ENCODE measurements at regions of chrX and their contacts with region 1.

Region 1: DNA sequence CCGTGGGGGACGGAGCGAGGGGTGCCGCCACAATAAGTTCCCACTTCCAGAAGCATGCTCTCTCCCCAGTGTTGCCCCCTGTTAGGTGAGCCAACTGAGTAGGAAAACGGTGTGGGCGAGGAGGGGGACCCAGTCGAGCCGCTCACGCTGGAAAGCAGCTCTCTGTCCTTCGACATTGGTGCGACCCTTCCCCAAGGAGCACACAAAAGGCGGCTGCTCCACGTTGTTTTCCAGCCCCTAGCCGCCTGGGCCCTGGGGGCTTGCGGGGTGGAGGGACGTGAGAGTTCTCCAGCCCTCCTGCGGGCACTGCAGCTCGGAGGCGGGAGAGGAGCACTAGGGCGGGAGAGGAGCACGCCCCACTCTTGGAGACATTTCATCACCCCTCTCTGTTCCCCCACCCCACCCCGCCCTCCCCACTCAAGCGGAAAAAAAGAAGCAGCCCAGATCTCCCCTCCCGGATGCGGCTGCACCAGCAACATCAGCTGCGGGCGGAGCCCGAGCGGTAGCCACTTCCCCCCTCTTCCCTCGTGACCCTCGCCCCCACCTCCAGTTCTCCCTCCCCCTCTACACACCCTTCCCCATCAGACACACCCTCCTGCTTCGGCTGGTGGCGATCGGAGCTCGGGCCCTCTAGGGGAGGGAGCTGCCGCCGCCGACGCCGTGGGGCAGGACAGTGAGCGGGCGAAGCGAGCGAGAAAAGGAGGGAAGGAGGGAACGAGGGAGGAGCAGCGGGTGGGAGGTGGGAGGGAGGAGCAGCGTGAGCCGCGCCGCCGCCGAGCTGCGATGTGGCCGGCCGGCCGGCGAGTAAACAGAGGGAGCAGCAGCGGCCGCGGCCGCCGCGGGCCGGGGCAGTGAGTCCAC is at the start of gene DOCK11:
- DNase-seq: peak; percentile 95
- H3K4me3 ChIP-seq: peak within 1 kb of the TSS; percentile 73 to 88 (median 81)
- H3K27ac ChIP-seq: peak within 1 kb of the TSS; percentile 86 to 93 (median 90)
- H3K4me1 ChIP-seq: peaks cover 0 to 17% (median 2%) of the 10 kb centered on the region in 4 donors
- H3K27me3 ChIP-seq: no peaks in the 10 kb centered on the region
- CTCF ChIP-seq: no peak
- EP300 ChIP-seq: no peak
- POLR2A ChIP-seq: no peak
- total RNA-seq, gene DOCK11: 40.7 to 54.6 (median 45.5) TPM

Region 2: GRCh38 chrX:118226090-118226428 is 269.2 kb before region 1 on chrX:
- intact Hi-C with region 1: no loop called
- DNase-seq: no peak
- H3K4me3 ChIP-seq: no peak overlapping the region
- H3K27ac ChIP-seq: no peak overlapping the region
- H3K4me1 ChIP-seq: peaks cover 0 to 6% (median 3%) of the 10 kb centered on the region in 4 donors
- H3K27me3 ChIP-seq: no peaks in the 10 kb centered on the region
- CTCF ChIP-seq: peak in 1 of 4 experiments; percentile 20
- EP300 ChIP-seq: no peak
- POLR2A ChIP-seq: no peak

Region 3: DNA sequence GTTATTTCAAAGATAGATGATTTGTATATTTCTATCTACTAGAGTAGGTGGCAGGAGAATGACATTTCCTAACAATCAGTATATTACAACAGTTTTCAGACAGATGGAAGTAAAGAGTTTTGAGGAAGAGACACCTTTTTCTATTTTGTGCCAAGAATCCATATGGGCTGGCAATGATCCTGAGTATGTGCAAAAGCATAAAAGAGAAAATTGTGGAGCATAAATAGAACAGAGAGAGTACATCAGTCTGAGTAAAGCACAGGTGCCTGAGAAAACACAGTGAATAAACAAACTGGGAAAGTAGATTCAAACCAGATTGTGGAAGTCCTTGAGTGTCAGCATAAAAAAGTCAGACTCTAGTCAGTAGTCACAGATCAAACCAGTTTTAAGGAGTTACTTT is 246.1 kb before region 1 on chrX:
- intact Hi-C with region 1: no loop called
- DNase-seq: no peak
- H3K4me3 ChIP-seq: no peak overlapping the region
- H3K27ac ChIP-seq: no peak overlapping the region
- H3K4me1 ChIP-seq: no peaks in the 10 kb centered on the region
- H3K27me3 ChIP-seq: no peaks in the 10 kb centered on the region
- CTCF ChIP-seq: no peak
- EP300 ChIP-seq: no peak
- POLR2A ChIP-seq: no peak

Region 4: DNA sequence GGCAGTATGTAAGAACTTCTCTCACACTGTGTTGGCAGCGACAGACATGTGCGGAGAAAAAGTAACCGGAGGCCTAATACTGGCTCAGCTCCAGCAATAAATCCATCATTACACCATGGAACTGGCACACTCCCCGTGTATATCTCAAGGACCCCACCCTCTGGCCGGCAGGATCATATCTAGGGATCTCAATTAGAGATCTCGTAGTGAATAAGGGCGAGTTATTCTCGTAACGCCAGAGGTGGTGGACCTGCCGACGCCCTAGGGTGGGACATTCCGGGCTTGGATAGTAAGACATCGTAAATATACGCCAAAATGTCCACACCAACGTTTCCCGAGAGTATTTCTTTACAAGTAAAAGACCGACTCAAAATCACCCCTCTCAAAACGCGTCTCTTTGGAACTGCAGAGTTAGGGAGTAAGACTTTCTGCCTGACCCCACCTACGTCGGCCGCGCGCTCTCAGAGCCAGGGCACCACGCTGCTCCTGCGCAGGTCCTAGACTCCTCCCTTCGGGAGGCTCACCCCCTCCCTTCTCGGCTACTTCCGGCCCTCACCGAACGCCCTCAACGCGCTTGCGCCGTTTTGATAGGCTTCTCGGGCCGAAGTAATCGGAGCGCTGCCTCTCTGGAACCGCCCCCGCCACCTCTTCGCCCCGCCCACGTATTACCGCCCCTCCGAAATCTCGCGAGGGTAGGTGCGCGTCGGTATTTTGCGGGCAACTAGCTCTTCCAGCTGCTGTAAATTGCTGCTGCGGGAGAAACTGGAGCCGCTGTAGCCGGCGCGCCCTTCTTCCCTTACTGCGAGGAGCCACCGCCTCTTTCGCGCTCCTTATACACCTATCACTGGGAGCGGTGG is 149.7 kb before region 1 on chrX and contains the start of gene WDR44:
- intact Hi-C with region 1: loop called (anchors 5 kb)
- DNase-seq: peak; percentile 98
- H3K4me3 ChIP-seq: peak within 1 kb of the TSS; percentile 53 to 75 (median 69)
- H3K27ac ChIP-seq: peak within 1 kb of the TSS; percentile 92 to 95 (median 92)
- H3K4me1 ChIP-seq: peaks cover 0 to 17% (median 11%) of the 10 kb centered on the region in 4 donors
- H3K27me3 ChIP-seq: no peaks in the 10 kb centered on the region
- CTCF ChIP-seq: no peak
- EP300 ChIP-seq: peak in 1 of 4 donors; percentile 19
- POLR2A ChIP-seq: peak; percentile 40
- total RNA-seq, gene WDR44: 17.0 to 23.2 (median 20.2) TPM

Region 5: GRCh38 chrX:118566359-118566758 is 71.1 kb after region 1 on chrX:
- intact Hi-C with region 1: loop called (anchors 10 kb)
- DNase-seq: no peak
- H3K4me3 ChIP-seq: no peak overlapping the region
- H3K27ac ChIP-seq: peak overlapping the region in 1 of 4 donors; percentile 15
- H3K4me1 ChIP-seq: peaks cover 0 to 10% (median 0%) of the 10 kb centered on the region in 4 donors
- H3K27me3 ChIP-seq: no peaks in the 10 kb centered on the region
- CTCF ChIP-seq: no peak
- EP300 ChIP-seq: no peak
- POLR2A ChIP-seq: no peak

Region 6: GRCh38 chrX:118603981-118604380 is 108.7 kb after region 1 on chrX:
- intact Hi-C with region 1: loop called (anchors 10 kb)
- DNase-seq: peak; percentile 76
- H3K4me3 ChIP-seq: no peak overlapping the region
- H3K27ac ChIP-seq: peak overlapping the region in 3 of 4 donors; percentile 34 to 59 (median 39)
- H3K4me1 ChIP-seq: peaks cover 0 to 10% (median 2%) of the 10 kb centered on the region in 4 donors
- H3K27me3 ChIP-seq: no peaks in the 10 kb centered on the region
- CTCF ChIP-seq: peak; percentile 58 to 81 (median 62)
- EP300 ChIP-seq: no peak
- POLR2A ChIP-seq: no peak

Region 7: DNA sequence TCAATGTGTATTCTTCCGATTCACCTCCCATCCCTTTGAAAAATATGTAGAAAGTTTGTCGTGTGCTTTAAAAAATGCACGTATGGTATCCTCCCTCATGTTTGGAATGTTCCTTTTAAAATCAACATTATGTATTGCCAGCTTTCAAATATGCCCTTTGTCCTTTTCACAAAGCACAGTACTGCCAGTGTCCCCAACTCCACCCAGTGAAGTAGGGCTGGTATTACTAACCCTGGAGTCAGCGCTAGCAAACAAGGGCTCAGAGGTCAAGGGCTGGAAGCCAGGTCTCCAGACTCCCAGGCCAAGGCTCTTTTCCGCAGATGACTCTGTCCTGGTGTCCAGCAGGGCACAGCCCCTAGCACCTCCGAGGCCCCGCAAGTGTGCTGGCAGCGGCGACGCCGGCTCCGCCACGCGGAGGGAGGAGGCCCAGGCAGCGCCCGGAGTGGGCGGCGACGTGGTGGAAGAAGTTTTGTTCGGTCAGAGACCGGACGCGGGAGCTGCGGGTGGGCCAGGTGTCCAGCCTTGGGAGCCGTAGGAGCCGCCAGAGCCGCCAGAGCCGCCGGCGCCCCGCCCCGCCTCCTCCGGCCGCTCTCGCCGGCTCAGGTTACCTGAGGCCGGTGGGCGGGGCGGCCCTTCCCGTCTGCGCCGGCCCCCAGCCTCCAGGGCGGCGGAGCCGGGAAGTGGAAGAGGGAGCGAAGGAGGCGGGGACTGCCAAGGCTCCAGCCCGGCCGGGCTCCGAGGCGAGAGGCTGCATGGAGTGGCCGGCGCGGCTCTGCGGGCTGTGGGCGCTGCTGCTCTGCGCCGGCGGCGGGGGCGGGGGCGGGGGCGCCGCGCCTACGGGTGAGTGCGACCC is 231.8 kb after region 1 on chrX and contains the start of gene IL13RA1:
- intact Hi-C with region 1: loop called (anchors 5 kb)
- DNase-seq: peak; percentile 90
- H3K4me3 ChIP-seq: peak within 1 kb of the TSS; percentile 55 to 85 (median 82)
- H3K27ac ChIP-seq: peak within 1 kb of the TSS; percentile 91 to 98 (median 94)
- H3K4me1 ChIP-seq: peaks cover 0 to 47% (median 20%) of the 10 kb centered on the region in 4 donors
- H3K27me3 ChIP-seq: no peaks in the 10 kb centered on the region
- CTCF ChIP-seq: no peak
- EP300 ChIP-seq: no peak
- POLR2A ChIP-seq: peak in 1 of 2 donors; percentile 26
- total RNA-seq, gene IL13RA1: 42.1 to 57.6 (median 52.0) TPM

Region 8: GRCh38 chrX:119235872-119236622 is 740.8 kb after region 1 on chrX and contains the start of gene PGRMC1:
- intact Hi-C with region 1: loop called (anchors 10 kb)
- DNase-seq: peak; percentile 91
- H3K4me3 ChIP-seq: peak within 1 kb of the TSS; percentile 66 to 81 (median 72)
- H3K27ac ChIP-seq: peak within 1 kb of the TSS; percentile 81 to 90 (median 88)
- H3K4me1 ChIP-seq: peaks cover 0 to 14% (median 5%) of the 10 kb centered on the region in 4 donors
- H3K27me3 ChIP-seq: no peaks in the 10 kb centered on the region
- CTCF ChIP-seq: no peak
- EP300 ChIP-seq: no peak
- POLR2A ChIP-seq: peak; percentile 71 to 75
- total RNA-seq, gene PGRMC1: 104 to 159 (median 132) TPM